Sigmoid colon (tissue), 7 donors: ENCODE measurements at regions of chr12 and their contacts with region 1.

Region 1: GRCh38 chr12:79555028-79555930 is 135.5 kb downstream of the PAWR start:
- DNase-seq: no peak
- H3K4me3 ChIP-seq: no peak overlapping the region
- H3K27ac ChIP-seq: no peak overlapping the region
- H3K4me1 ChIP-seq: peaks cover 0 to 39% (median 7%) of the 10 kb centered on the region in 4 donors
- H3K27me3 ChIP-seq: no peaks in the 10 kb centered on the region
- CTCF ChIP-seq: peak; percentile 40 to 58 (median 49)
- EP300 ChIP-seq: no peak
- POLR2A ChIP-seq: no peak

Region 2: DNA sequence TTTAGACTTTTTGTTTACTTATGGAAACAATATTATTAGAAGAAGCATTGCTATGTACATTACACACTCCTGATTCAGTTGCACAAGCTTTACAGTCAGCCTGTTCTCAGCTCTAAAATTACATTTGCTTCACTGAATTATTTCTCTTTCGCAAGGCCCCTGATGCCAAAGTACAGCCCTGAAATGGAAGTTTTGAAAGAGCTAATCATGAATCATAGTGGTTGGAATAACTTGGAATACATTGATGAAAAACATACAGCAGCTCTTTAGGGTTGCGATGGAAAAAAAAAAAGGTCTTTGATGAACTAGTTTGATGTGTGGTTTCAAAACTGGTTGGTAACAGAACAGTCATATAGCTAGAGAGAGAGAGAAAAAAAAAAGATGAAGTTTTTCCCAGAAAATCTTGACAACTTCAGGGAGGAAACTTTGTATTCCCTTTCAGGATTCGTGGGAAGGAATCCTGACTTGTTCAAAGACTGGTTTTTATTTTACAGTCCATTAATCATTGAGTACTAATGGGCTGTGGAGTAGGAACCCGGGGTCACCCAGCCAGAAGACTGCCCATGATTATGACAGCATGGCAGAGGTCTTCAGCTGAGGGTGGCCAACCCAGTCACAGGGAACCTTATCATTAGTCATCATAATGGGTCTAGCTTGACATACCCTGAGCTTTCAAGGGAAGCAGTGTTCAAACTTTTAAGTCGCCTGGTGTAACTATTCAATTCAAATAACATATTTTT is 1264.5 kb before region 1 on chr12:
- intact Hi-C with region 1: no loop called
- DNase-seq: no peak
- H3K4me3 ChIP-seq: no peak overlapping the region
- H3K27ac ChIP-seq: no peak overlapping the region
- H3K4me1 ChIP-seq: peaks cover 0 to 6% (median 2%) of the 10 kb centered on the region in 4 donors
- H3K27me3 ChIP-seq: no peaks in the 10 kb centered on the region
- CTCF ChIP-seq: no peak
- EP300 ChIP-seq: no peak
- POLR2A ChIP-seq: no peak

Region 3: GRCh38 chr12:79512053-79512452 is 43.2 kb before region 1 on chr12:
- intact Hi-C with region 1: no loop called
- DNase-seq: no peak
- H3K4me3 ChIP-seq: no peak overlapping the region
- H3K27ac ChIP-seq: no peak overlapping the region
- H3K4me1 ChIP-seq: no peaks in the 10 kb centered on the region
- H3K27me3 ChIP-seq: no peaks in the 10 kb centered on the region
- CTCF ChIP-seq: no peak
- EP300 ChIP-seq: no peak
- POLR2A ChIP-seq: no peak

Region 4: DNA sequence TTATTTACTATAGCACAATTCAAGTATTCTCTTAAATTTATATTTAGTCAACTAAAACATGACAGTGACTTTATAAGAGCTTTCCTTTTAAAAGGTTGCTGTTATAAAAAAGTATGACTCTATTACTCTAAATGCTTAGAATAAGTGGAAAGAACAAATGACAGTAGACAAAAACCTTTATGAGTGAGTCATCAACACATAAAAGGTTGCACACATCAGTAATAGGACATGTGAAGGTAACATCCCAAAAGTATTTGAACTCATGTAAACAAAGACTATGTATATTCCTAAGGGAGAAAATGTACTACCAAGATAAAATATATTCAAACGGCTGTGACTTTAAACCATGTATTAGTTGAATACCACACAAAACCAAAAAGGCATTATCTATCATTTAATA is 36.7 kb after region 1 on chr12:
- intact Hi-C with region 1: no loop called
- DNase-seq: no peak
- H3K4me3 ChIP-seq: no peak overlapping the region
- H3K27ac ChIP-seq: no peak overlapping the region
- H3K4me1 ChIP-seq: peaks cover 0 to 5% (median 0%) of the 10 kb centered on the region in 4 donors
- H3K27me3 ChIP-seq: no peaks in the 10 kb centered on the region
- CTCF ChIP-seq: no peak
- EP300 ChIP-seq: no peak
- POLR2A ChIP-seq: no peak

Region 5: GRCh38 chr12:79615596-79616560 is 60.6 kb after region 1 on chr12:
- intact Hi-C with region 1: no loop called
- DNase-seq: no peak
- H3K4me3 ChIP-seq: no peak overlapping the region
- H3K27ac ChIP-seq: no peak overlapping the region
- H3K4me1 ChIP-seq: no peaks in the 10 kb centered on the region
- H3K27me3 ChIP-seq: no peaks in the 10 kb centered on the region
- CTCF ChIP-seq: no peak
- EP300 ChIP-seq: no peak
- POLR2A ChIP-seq: no peak

Region 6: GRCh38 chr12:79690638-79691493 is 135.6 kb after region 1 on chr12 and contains the start of gene PAWR:
- intact Hi-C with region 1: loop called (anchors 5 kb)
- DNase-seq: peak; percentile 71
- H3K4me3 ChIP-seq: peak within 1 kb of the TSS; percentile 69 to 88 (median 86)
- H3K27ac ChIP-seq: peak within 1 kb of the TSS; percentile 83 to 91 (median 87)
- H3K4me1 ChIP-seq: peaks cover 0 to 36% (median 9%) of the 10 kb centered on the region in 4 donors
- H3K27me3 ChIP-seq: no peaks in the 10 kb centered on the region
- CTCF ChIP-seq: peak in 1 of 4 experiments; percentile 30
- EP300 ChIP-seq: no peak
- POLR2A ChIP-seq: no peak
- total RNA-seq, gene PAWR: 22.1 to 53.5 (median 30.2) TPM

Region 7: GRCh38 chr12:79737875-79738718 is 182.8 kb after region 1 on chr12:
- intact Hi-C with region 1: loop called (anchors 5 kb)
- DNase-seq: no peak
- H3K4me3 ChIP-seq: no peak overlapping the region
- H3K27ac ChIP-seq: no peak overlapping the region
- H3K4me1 ChIP-seq: no peaks in the 10 kb centered on the region
- H3K27me3 ChIP-seq: no peaks in the 10 kb centered on the region
- CTCF ChIP-seq: peak; percentile 11 to 64 (median 51)
- EP300 ChIP-seq: no peak
- POLR2A ChIP-seq: no peak

Region 8: GRCh38 chr12:80200408-80200807 is 645.1 kb after region 1 on chr12:
- intact Hi-C with region 1: loop called (anchors 10 kb)
- DNase-seq: no peak
- H3K4me3 ChIP-seq: no peak overlapping the region
- H3K27ac ChIP-seq: no peak overlapping the region
- H3K4me1 ChIP-seq: peaks cover 0 to 2% (median 0%) of the 10 kb centered on the region in 4 donors
- H3K27me3 ChIP-seq: no peaks in the 10 kb centered on the region
- CTCF ChIP-seq: no peak
- EP300 ChIP-seq: no peak
- POLR2A ChIP-seq: no peak